HepG2 (cell line): ENCODE measurements at regions of chr19 and their contacts with region 1.

Region 1: GRCh38 chr19:17215125-17215971 is at the start of gene USE1:
- DNase-seq: peak; percentile 86
- ATAC-seq: peak; percentile 93
- H3K4me3 ChIP-seq: peak within 1 kb of the TSS; percentile 63 to 94 (median 81)
- H3K27ac ChIP-seq: peak within 1 kb of the TSS; percentile 97
- H3K4me1 ChIP-seq: peaks cover 36% of the 10 kb centered on the region
- H3K27me3 ChIP-seq: no peaks in the 10 kb centered on the region; a peak in 1 of 5 replicates
- CTCF ChIP-seq: 0 out of 2 replicates have a peak, but pooled peaks have one; percentile 10
- EP300 ChIP-seq: no peak; a peak in 1 of 4 replicates
- POLR2A ChIP-seq: peak; percentile 73 to 96
- RAD21 ChIP-seq: peak; percentile 68
- total RNA-seq, gene USE1: 9.9 and 10.3 TPM in 2 replicates

Region 2: DNA sequence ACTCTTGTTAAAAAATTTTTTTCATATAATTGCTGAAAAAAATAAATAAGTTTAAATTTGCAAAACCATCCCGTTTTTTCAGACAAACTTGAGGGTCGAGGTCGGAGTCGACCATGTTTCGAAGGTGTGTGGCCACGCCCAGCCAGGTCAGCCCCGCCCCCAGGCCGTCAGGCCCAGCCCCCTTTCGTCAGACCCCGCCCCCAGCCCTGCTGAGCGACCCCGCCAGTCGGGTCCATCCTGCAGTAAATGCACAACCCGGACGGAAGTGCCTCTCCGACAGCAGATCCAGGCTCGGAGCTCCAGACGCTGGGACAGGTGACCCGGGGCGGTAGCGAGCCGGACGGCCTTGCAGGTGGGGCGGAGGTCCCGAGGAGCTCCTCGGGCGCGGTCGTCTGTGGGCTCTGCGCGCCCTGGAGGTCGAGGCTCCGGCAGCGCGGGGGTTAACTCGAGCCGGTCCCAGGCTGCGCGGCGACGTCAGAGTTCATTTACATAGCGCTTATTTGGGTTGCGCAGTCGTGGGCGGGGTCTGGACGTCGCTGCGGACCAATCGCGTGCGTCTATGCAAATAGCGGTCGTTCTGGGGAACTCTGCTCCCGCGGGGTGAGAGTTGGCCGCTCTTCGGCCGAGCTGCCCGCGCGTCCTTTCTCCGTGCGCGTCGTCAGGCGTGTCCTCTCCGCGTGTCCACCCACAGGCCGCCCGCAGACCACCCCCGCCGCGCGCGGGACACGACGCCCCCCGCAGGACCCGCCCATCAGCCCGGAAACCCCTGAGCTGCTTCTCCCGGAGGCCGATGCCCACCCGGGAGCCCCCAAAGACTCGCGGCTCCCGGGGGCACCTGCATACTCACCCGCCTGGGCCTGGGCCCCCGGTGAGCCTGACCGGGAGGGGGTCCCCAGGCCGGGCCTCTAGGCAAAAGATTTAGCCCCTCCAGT is 10.9 kb after region 1 on chr19 and contains the start of gene OCEL1:
- CTCF ChIA-PET with region 1: no interaction called
- POLR2A ChIA-PET with region 1: interaction called, 120 read pairs
- in situ Hi-C with region 1: no loop called
- intact Hi-C with region 1: no loop called
- DNase-seq: peak; percentile 95
- ATAC-seq: peak; percentile 92
- H3K4me3 ChIP-seq: peak within 1 kb of the TSS; percentile 68 to 80 (median 79)
- H3K27ac ChIP-seq: peak within 1 kb of the TSS; percentile 94
- H3K4me1 ChIP-seq: peaks cover 23% of the 10 kb centered on the region
- H3K27me3 ChIP-seq: no peaks in the 10 kb centered on the region; a peak in 1 of 5 replicates
- CTCF ChIP-seq: peak; percentile 17; the same call in 1 of the 2 replicates
- EP300 ChIP-seq: no peak
- POLR2A ChIP-seq: peak; percentile 93 to 97
- RAD21 ChIP-seq: peak; percentile 38; the same call in 1 of the 2 replicates
- total RNA-seq, gene OCEL1: 10.6 and 13.6 TPM in 2 replicates

Region 3: GRCh38 chr19:17245244-17245984 is 30.1 kb after region 1 on chr19 and contains the start of gene NR2F6:
- CTCF ChIA-PET with region 1: no interaction called
- POLR2A ChIA-PET with region 1: interaction called, 43 read pairs
- in situ Hi-C with region 1: no loop called
- intact Hi-C with region 1: no loop called
- DNase-seq: no peak
- ATAC-seq: no peak
- H3K4me3 ChIP-seq: peak within 1 kb of the TSS; percentile 87 to 92 (median 89)
- H3K27ac ChIP-seq: peak within 1 kb of the TSS; percentile 95
- H3K4me1 ChIP-seq: peaks cover 73% of the 10 kb centered on the region
- H3K27me3 ChIP-seq: no peaks in the 10 kb centered on the region
- CTCF ChIP-seq: no peak
- EP300 ChIP-seq: no peak
- POLR2A ChIP-seq: peak in 1 of 2 experiments; percentile 73; a peak in 3 of 4 replicates
- RAD21 ChIP-seq: peak; percentile 19; the same call in 1 of the 2 replicates
- total RNA-seq, gene NR2F6: 54.1 and 72.4 TPM in 2 replicates

Region 4: GRCh38 chr19:17260842-17261325 is 45.5 kb after region 1 on chr19:
- CTCF ChIA-PET with region 1: no interaction called
- POLR2A ChIA-PET with region 1: interaction called, 18 read pairs
- in situ Hi-C with region 1: no loop called
- intact Hi-C with region 1: no loop called
- DNase-seq: peak; percentile 82
- ATAC-seq: peak; percentile 94
- H3K4me3 ChIP-seq: peak overlapping the region in 2 of 3 experiments; percentile 8 to 59; a peak in 1 of 6 replicates
- H3K27ac ChIP-seq: no peak overlapping the region
- H3K4me1 ChIP-seq: peaks cover 61% of the 10 kb centered on the region
- H3K27me3 ChIP-seq: no peaks in the 10 kb centered on the region
- CTCF ChIP-seq: peak; percentile 94
- EP300 ChIP-seq: no peak
- POLR2A ChIP-seq: no peak
- RAD21 ChIP-seq: peak; percentile 76

Region 5: DNA sequence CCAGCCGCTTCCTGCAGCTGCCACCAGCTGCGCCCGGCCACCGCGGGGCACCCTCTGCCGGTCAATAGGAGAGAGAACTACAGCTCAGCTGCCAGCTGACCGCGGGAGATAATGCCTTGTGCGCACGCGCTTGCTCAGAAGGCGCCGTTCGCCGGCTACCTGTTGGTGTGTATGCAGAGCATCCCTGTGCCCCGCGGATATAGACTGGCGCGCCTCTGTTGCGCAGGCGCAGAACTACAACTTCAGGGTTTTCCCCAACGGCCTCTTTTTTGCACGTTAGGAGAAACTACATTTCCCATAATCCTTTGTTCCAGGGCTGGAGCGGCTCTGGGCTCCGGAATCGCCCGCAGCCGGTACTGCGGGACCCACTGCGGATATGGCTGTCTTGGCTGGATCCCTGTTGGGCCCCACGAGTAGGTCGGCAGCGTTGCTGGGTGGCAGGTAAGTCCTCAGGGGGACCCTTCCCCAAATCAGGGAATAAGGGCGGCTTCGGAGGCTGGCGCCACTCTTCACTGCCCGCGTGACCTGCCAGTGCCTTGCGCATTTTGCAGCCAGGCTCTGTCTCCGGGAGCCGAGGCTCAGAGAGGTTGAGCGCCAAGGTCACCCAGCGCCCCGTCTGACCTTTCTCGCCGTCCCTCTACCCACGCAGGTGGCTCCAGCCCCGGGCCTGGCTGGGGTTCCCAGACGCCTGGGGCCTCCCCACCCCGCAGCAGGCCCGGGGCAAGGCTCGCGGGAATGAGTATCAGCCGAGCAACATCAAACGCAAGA is 90.4 kb after region 1 on chr19 and contains the start of gene MRPL34:
- CTCF ChIA-PET with region 1: no interaction called
- POLR2A ChIA-PET with region 1: interaction called, 14 read pairs
- in situ Hi-C with region 1: no loop called
- intact Hi-C with region 1: loop called (anchors 1 kb)
- DNase-seq: peak; percentile 99
- ATAC-seq: peak; percentile 70
- H3K4me3 ChIP-seq: peak within 1 kb of the TSS; percentile 60 to 87 (median 85)
- H3K27ac ChIP-seq: peak within 1 kb of the TSS; percentile 91
- H3K4me1 ChIP-seq: peaks cover 40% of the 10 kb centered on the region
- H3K27me3 ChIP-seq: no peaks in the 10 kb centered on the region; a peak in 1 of 5 replicates
- CTCF ChIP-seq: peak; percentile 96
- EP300 ChIP-seq: no peak
- POLR2A ChIP-seq: peak; percentile 61 to 76; a peak in 3 of 4 replicates
- RAD21 ChIP-seq: peak; percentile 89
- total RNA-seq, gene MRPL34: 77.3 and 93.6 TPM in 2 replicates